PC-3 (cell line): ENCODE measurements at regions of chr17 and their contacts with region 1.

Region 1: DNA sequence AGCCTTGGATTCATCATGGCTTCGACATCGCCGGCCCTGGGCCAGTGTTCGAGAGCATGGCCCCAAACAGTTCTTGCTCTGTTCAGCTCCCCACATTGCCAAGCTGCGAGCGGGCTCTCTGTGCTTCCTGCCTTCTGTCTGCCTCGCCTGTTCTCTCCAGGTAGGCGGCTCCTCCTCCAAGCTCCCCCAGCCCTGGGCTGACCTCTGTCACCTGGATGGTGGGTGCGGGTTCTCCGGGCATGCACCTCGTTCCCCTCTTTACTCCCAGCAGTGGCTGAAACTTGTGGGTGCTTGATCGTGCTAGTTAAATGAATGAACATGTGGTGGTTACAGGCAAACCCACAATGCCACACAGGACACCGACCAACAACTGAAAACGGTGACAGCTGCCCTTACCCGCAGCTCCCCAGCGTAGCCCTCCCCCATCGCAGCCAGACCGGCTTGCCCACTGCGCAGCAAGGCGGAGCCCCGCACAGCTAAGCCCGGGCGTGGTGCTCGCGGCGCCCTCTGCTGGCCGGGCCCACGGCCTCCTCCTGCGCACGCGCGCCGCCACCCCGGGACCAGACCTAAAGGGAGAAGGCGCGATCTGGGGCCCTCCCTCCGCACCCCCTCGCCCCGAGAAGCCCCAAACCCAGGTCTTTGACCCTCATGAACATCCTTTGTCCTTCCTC is 23.0 kb upstream of the EIF1 start:
- DNase-seq: peak; percentile 86
- ATAC-seq: peak; percentile 78
- H3K4me3 ChIP-seq: peak overlapping the region; percentile 64
- H3K27ac ChIP-seq: peak overlapping the region; percentile 42
- H3K4me1 ChIP-seq: peaks cover 25% of the 10 kb centered on the region
- H3K27me3 ChIP-seq: no peaks in the 10 kb centered on the region
- CTCF ChIP-seq: peak; percentile 84

Region 2: GRCh38 chr17:40622509-40622928 is 1043.2 kb before region 1 on chr17:
- CTCF ChIA-PET with region 1: no interaction called
- POLR2A ChIA-PET with region 1: no interaction called
- intact Hi-C with region 1: loop called (anchors 5 kb)
- DNase-seq: no peak
- ATAC-seq: no peak
- H3K4me3 ChIP-seq: no peak overlapping the region
- H3K27ac ChIP-seq: no peak overlapping the region
- H3K4me1 ChIP-seq: no peaks in the 10 kb centered on the region
- H3K27me3 ChIP-seq: no peaks in the 10 kb centered on the region
- CTCF ChIP-seq: no peak

Region 3: GRCh38 chr17:40854159-40854814 is 811.4 kb before region 1 on chr17:
- CTCF ChIA-PET with region 1: interaction called, 3 read pairs
- POLR2A ChIA-PET with region 1: no interaction called
- intact Hi-C with region 1: loop called (anchors 10 kb)
- DNase-seq: peak; percentile 84
- ATAC-seq: peak; percentile 81
- H3K4me3 ChIP-seq: no peak overlapping the region
- H3K27ac ChIP-seq: peak overlapping the region; percentile 64
- H3K4me1 ChIP-seq: peaks cover 51% of the 10 kb centered on the region
- H3K27me3 ChIP-seq: no peaks in the 10 kb centered on the region
- CTCF ChIP-seq: no peak

Region 4: DNA sequence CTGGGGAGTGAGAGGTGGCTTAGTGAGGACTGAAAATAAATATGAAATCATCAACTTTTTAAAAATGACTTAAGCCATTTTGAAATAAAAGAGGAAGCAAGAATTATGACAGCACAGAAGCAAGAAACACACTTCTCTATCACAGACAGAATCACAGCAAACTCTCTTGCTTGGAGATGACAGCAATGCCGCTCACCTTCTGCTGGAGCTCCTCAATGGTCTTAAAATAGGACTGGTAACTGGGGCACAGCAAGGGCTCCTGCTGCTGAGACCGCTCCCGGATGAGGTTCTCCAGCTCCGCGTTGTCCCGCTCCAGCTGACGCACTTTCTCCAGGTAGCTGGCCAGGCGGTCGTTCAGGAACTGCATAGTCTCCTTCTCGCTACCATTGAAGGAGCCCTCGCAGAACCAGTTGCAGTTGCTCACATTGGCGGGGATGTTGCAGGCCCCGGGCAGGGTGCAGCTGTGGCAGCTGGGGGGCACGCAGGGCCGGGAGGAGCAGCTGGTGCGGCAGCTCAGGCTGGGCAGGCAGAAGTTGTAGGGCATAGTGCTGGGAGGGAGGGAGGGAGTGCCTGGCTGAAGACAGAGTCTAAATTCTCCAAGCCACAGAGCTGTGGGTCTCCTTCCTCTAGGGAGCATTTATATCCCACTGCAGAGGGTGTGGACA is 268.6 kb before region 1 on chr17 and contains the start of gene KRT31:
- CTCF ChIA-PET with region 1: no interaction called
- POLR2A ChIA-PET with region 1: no interaction called
- intact Hi-C with region 1: no loop called
- DNase-seq: no peak
- ATAC-seq: no peak
- H3K4me3 ChIP-seq: no peak within 1 kb of the TSS
- H3K27ac ChIP-seq: no peak within 1 kb of the TSS
- H3K4me1 ChIP-seq: peaks cover 14% of the 10 kb centered on the region
- H3K27me3 ChIP-seq: no peaks in the 10 kb centered on the region
- CTCF ChIP-seq: no peak
- total RNA-seq, gene KRT31: not detected in 2 replicates

Region 5: GRCh38 chr17:41521574-41522261 is 144.0 kb before region 1 on chr17:
- CTCF ChIA-PET with region 1: interaction called, 7 read pairs
- POLR2A ChIA-PET with region 1: interaction called, 14 read pairs
- intact Hi-C with region 1: no loop called
- DNase-seq: peak; percentile 95
- ATAC-seq: peak; percentile 60
- H3K4me3 ChIP-seq: peak overlapping the region; percentile 42; the same call in 1 of the 2 replicates
- H3K27ac ChIP-seq: peak overlapping the region; percentile 97
- H3K4me1 ChIP-seq: peaks cover 76% of the 10 kb centered on the region
- H3K27me3 ChIP-seq: no peaks in the 10 kb centered on the region
- CTCF ChIP-seq: no peak

Region 6: DNA sequence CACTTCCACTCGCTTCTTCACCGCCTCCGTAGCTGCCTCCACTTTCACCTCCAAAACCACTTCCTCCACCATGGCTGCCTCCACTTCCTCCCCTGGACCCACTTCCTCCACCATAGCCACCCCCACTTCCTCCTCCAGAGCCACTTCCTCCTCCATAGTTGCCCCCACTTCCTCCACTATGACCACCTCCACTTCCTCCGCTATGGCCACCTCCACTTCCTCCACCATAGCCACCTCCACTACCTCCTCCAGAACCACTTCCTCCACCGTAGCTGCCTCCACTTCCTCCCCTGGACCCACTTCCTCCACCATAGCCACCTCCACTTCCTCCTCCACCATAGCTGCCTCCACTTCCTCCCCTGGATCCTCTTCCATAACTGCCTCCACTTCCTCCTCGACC is 98.4 kb before region 1 on chr17:
- CTCF ChIA-PET with region 1: no interaction called
- POLR2A ChIA-PET with region 1: interaction called, 11 read pairs
- intact Hi-C with region 1: no loop called
- DNase-seq: no peak
- ATAC-seq: no peak
- H3K4me3 ChIP-seq: no peak overlapping the region
- H3K27ac ChIP-seq: no peak overlapping the region
- H3K4me1 ChIP-seq: no peaks in the 10 kb centered on the region
- H3K27me3 ChIP-seq: no peaks in the 10 kb centered on the region
- CTCF ChIP-seq: no peak

Region 7: GRCh38 chr17:41684035-41684434 is 18.3 kb after region 1 on chr17:
- CTCF ChIA-PET with region 1: interaction called, 10 read pairs
- POLR2A ChIA-PET with region 1: interaction called, 9 read pairs
- intact Hi-C with region 1: no loop called
- DNase-seq: no peak
- ATAC-seq: no peak
- H3K4me3 ChIP-seq: no peak overlapping the region
- H3K27ac ChIP-seq: no peak overlapping the region
- H3K4me1 ChIP-seq: peaks cover 4% of the 10 kb centered on the region
- H3K27me3 ChIP-seq: no peaks in the 10 kb centered on the region
- CTCF ChIP-seq: no peak